ENCODE measurements at regions of chr10 and their contacts with region 1.

Region 1: GRCh38 chr10:32958085-32959005 is at the start of gene ITGB1:
- DNase-seq: peak; percentile 96
- H3K4me3 ChIP-seq: peak within 1 kb of the TSS; percentile 78 to 95
- H3K27ac ChIP-seq: peak within 1 kb of the TSS; percentile 93 to 98
- H3K4me1 ChIP-seq: peaks cover 12 to 26% of the 10 kb centered on the region in 2 experiments
- H3K27me3 ChIP-seq: no peaks in the 10 kb centered on the region
- CTCF ChIP-seq: no peak
- EP300 ChIP-seq: peak; percentile 11 to 61; a peak in 1 of 4 replicates
- RAD21 ChIP-seq: no peak
- polyA plus RNA-seq, gene ITGB1: 666 and 846 TPM in 2 replicates

Region 2: GRCh38 chr10:32980558-32981468 is 22.5 kb after region 1 on chr10:
- CTCF ChIA-PET with region 1: interaction called, 4 read pairs
- POLR2A ChIA-PET with region 1: interaction called, 15 read pairs
- DNase-seq: peak; percentile 81
- H3K4me3 ChIP-seq: peak overlapping the region; percentile 47 to 61
- H3K27ac ChIP-seq: peak overlapping the region; percentile 97 to 99
- H3K4me1 ChIP-seq: peaks cover 28 to 32% of the 10 kb centered on the region in 2 experiments
- H3K27me3 ChIP-seq: no peaks in the 10 kb centered on the region
- CTCF ChIP-seq: no peak
- EP300 ChIP-seq: peak in 1 of 2 experiments; percentile 89
- RAD21 ChIP-seq: no peak

Measured in SK-N-SH (cell line).